HepG2 (cell line): ENCODE measurements at regions of chr1 and their contacts with region 1.

Region 1: DNA sequence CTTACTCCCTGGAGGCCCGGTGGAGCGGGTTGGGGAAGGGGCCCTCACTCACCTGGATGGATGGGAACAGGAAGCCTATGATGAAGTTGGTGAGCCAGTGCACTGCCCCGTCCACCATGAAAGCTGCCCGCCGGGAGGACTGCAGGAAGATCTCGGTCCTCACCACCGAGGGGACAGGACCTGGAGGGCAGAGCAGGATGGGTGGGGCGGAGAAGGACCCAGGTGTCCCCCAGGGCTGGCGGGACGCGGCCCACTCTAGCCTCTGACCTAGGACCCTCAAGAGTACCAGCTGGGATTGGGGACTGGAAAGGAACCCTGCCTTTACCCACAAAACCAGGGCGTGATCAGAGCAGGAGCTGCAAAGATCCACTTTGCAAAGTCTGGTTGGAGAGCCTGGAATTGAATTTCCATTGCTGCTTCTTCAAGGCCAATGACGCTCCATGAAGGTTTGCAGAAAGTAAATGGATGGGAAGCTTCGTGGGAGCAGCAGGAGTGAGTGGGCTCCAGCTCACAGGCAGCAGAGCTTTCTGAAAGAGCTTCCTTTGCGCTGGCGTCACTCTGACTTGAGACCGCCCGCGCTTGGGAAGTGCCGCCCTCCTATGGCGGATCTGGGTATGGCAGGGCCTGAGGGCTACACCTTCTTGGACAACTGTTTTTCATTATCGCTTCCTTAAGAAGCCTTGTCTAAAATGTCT is 21.4 kb downstream of the SLC2A7 start:
- DNase-seq: peak; percentile 60
- ATAC-seq: peak; percentile 78
- H3K4me3 ChIP-seq: peak overlapping the region in 2 of 3 experiments; percentile 29 to 62; a peak in 4 of 6 replicates
- H3K27ac ChIP-seq: no peak overlapping the region
- H3K4me1 ChIP-seq: peaks cover 51% of the 10 kb centered on the region
- H3K27me3 ChIP-seq: peaks cover 4 to 12% of the 10 kb centered on the region in 2 experiments; a peak in 4 of 5 replicates
- CTCF ChIP-seq: peak; percentile 92
- EP300 ChIP-seq: no peak
- POLR2A ChIP-seq: no peak
- RAD21 ChIP-seq: peak; percentile 68; the same call in 1 of the 2 replicates

Region 2: GRCh38 chr1:8915446-8915845 is 89.4 kb before region 1 on chr1:
- CTCF ChIA-PET with region 1: interaction called, 27 read pairs
- POLR2A ChIA-PET with region 1: no interaction called
- in situ Hi-C with region 1: loop called (anchors 5 kb)
- intact Hi-C with region 1: loop called (anchors 1 kb)
- DNase-seq: no peak
- ATAC-seq: no peak
- H3K4me3 ChIP-seq: no peak overlapping the region
- H3K27ac ChIP-seq: no peak overlapping the region
- H3K4me1 ChIP-seq: peaks cover 70% of the 10 kb centered on the region
- H3K27me3 ChIP-seq: no peaks in the 10 kb centered on the region; a peak in 1 of 5 replicates
- CTCF ChIP-seq: no peak
- EP300 ChIP-seq: no peak
- POLR2A ChIP-seq: no peak
- RAD21 ChIP-seq: no peak

Region 3: GRCh38 chr1:9101510-9102146 is 96.8 kb after region 1 on chr1:
- CTCF ChIA-PET with region 1: no interaction called
- POLR2A ChIA-PET with region 1: no interaction called
- in situ Hi-C with region 1: no loop called
- intact Hi-C with region 1: loop called (anchors 1 kb)
- DNase-seq: peak; percentile 55
- ATAC-seq: peak; percentile 81
- H3K4me3 ChIP-seq: no peak overlapping the region
- H3K27ac ChIP-seq: no peak overlapping the region
- H3K4me1 ChIP-seq: peaks cover 38% of the 10 kb centered on the region
- H3K27me3 ChIP-seq: no peaks in the 10 kb centered on the region
- CTCF ChIP-seq: peak; percentile 83
- EP300 ChIP-seq: no peak
- POLR2A ChIP-seq: no peak
- RAD21 ChIP-seq: peak; percentile 70

Region 4: GRCh38 chr1:9292361-9293240 is 287.8 kb after region 1 on chr1 and contains the start of gene SPSB1:
- CTCF ChIA-PET with region 1: no interaction called
- POLR2A ChIA-PET with region 1: no interaction called
- in situ Hi-C with region 1: no loop called
- intact Hi-C with region 1: no loop called
- DNase-seq: peak; percentile 44
- ATAC-seq: peak; percentile 79
- H3K4me3 ChIP-seq: peak within 1 kb of the TSS; percentile 53 to 83 (median 76)
- H3K27ac ChIP-seq: peak within 1 kb of the TSS; percentile 43
- H3K4me1 ChIP-seq: peaks cover 66% of the 10 kb centered on the region
- H3K27me3 ChIP-seq: no peaks in the 10 kb centered on the region
- CTCF ChIP-seq: no peak
- EP300 ChIP-seq: no peak
- POLR2A ChIP-seq: peak; percentile 72 to 73
- RAD21 ChIP-seq: no peak
- total RNA-seq, gene SPSB1: 5.0 and 7.1 TPM in 2 replicates